K562 (cell line): ENCODE measurements at regions of chr9 and their contacts with region 1.

Region 1: DNA sequence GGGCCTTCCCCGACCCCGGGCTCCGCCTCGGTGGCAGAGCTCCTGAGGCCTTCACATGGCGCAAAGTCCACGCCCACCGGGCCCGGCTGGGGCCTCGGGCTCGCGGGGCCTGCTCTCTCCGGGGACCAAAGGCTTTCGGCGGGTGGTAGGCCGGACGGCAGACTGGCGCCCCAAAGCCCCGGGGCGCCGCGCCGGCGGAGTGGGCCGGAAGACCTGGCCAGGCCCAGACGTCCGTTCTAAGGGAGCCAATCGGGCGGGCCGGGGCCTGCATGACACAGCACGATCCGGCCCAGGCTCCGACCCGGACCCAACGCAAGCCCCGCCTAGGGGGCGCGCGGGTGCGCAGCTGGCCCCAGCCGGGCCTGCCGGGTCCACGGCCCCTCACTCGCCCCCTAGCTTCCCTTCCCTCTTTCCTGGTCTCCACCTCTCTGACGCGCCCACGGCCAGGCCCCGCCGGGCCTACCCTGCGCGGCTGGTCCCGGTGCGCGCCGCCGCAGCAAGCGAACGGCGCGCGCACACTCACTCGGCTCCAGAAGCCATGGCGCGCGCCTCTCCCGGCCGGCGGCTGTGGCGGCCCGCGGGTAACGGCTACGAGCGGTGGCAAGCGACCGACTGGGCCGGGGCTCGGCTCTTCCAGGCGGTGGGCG is 488 bp downstream of the VCP start:
- DNase-seq: peak; percentile 81 to 90 (median 87)
- ATAC-seq: peak; percentile 92
- H3K4me3 ChIP-seq: peak overlapping the region; percentile 99
- H3K27ac ChIP-seq: peak overlapping the region; percentile 97
- H3K4me1 ChIP-seq: peaks cover 5 to 15% of the 10 kb centered on the region in 2 experiments; a peak in 3 of 5 replicates
- H3K27me3 ChIP-seq: no peaks in the 10 kb centered on the region
- CTCF ChIP-seq: peak; percentile 51 to 77 (median 56)
- EP300 ChIP-seq: no peak
- POLR2A ChIP-seq: no peak
- RAD21 ChIP-seq: peak in 1 of 2 experiments; percentile 8; a peak in 1 of 4 replicates

Region 2: DNA sequence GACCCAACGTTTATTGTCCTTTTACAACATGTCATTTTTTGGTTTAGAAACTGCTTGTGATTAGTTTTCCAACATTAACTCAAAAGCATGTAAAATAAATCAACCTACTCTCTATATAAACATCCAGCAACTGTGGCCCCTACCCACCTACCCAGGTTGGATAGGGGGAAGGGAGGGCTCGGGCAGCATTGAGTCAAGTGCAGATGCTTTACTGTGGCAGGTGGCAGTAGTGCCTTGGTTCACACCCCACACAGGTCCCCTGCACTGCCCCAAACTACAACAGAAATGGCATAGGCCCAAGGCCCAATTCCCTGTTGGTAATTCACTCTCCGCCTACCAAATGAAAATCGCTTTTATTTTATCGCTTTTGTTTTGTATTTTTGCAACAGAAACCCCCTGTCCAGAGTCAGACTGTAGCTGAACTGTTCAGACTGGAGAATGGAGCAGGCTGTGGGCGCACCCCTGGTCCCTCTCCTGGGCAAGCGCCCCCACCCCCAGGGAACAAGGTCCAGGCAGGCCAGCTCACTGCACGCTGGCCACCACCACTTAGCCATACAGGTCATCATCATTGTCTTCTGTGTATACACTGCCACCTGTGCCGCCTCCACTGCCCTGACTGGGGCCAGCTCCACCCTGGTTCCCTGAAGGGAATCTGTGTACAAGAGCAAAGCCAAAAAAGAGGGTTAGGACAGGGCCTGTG is 15.2 kb before region 1 on chr9:
- CTCF ChIA-PET with region 1: interaction called, 3 read pairs
- POLR2A ChIA-PET with region 1: interaction called, 32 read pairs
- in situ Hi-C with region 1: no loop called
- intact Hi-C with region 1: no loop called
- DNase-seq: no peak
- ATAC-seq: no peak
- H3K4me3 ChIP-seq: no peak overlapping the region
- H3K27ac ChIP-seq: no peak overlapping the region
- H3K4me1 ChIP-seq: no peaks in the 10 kb centered on the region
- H3K27me3 ChIP-seq: no peaks in the 10 kb centered on the region
- CTCF ChIP-seq: no peak
- EP300 ChIP-seq: no peak
- POLR2A ChIP-seq: no peak
- RAD21 ChIP-seq: no peak

Region 3: DNA sequence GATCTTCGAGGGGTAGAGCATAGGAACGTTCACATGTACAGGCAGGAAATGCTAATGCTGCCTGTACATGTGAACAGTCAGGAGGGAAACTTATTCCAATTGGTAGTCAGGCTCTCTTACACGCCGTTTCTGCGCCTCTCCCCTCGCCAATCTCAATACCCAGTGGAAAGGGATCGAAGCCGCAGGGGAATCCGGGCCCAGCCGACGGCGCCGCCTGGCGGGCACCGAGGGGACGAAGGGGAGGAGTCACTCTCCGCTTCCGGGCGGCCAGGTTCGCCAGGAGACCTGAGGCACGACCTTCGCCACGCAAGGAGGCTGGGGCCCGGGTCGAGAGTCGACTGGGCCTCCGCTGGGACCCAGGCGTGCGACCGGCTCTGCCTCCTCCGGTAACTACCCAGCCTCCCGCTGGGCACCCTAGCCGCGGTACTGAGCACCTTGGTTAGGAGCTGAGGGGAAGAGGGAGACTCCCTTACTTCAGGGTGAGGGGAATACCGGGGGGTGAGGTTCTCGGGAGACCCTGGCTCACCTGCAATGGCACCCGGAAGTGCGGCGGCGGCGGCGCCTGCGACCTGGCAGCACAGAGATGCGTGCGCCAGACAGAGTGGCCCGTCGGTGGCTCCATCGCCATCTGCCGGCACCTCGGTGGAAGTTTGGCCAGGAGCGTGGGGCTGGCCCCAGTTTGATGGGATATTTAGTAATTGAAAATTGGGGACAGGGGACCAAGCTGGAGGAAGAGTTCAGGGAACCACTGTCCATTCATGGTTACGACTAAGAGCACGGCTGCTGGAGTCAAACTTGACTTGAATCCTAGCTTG is 24.3 kb after region 1 on chr9 and contains the start of gene PIGO:
- CTCF ChIA-PET with region 1: no interaction called
- POLR2A ChIA-PET with region 1: interaction called, 7 read pairs
- in situ Hi-C with region 1: no loop called
- intact Hi-C with region 1: loop called (anchors 2 kb)
- DNase-seq: peak; percentile 81 to 90 (median 82)
- ATAC-seq: peak; percentile 97
- H3K4me3 ChIP-seq: peak within 1 kb of the TSS; percentile 99
- H3K27ac ChIP-seq: peak within 1 kb of the TSS; percentile 100
- H3K4me1 ChIP-seq: peaks cover 6 to 15% of the 10 kb centered on the region in 2 experiments; a peak in 4 of 5 replicates
- H3K27me3 ChIP-seq: no peaks in the 10 kb centered on the region
- CTCF ChIP-seq: peak; percentile 78 to 85 (median 82)
- EP300 ChIP-seq: no peak
- POLR2A ChIP-seq: peak; percentile 90
- RAD21 ChIP-seq: peak; percentile 57 to 61
- polyA plus RNA-seq, gene PIGO: 5.6 to 5.9 TPM

Region 4: GRCh38 chr9:35357116-35357515 is 285.2 kb after region 1 on chr9:
- CTCF ChIA-PET with region 1: no interaction called
- POLR2A ChIA-PET with region 1: no interaction called
- in situ Hi-C with region 1: no loop called
- intact Hi-C with region 1: no loop called
- DNase-seq: no peak
- ATAC-seq: no peak
- H3K4me3 ChIP-seq: no peak overlapping the region
- H3K27ac ChIP-seq: no peak overlapping the region
- H3K4me1 ChIP-seq: 0 out of 5 replicates have a peak, but pooled peaks cover 0 to 2% of the 10 kb centered on the region in 2 experiments
- H3K27me3 ChIP-seq: no peaks in the 10 kb centered on the region
- CTCF ChIP-seq: no peak
- EP300 ChIP-seq: no peak
- POLR2A ChIP-seq: no peak
- RAD21 ChIP-seq: no peak